ENCODE measurements at regions of chr11 and their contacts with region 1.

Region 1: DNA sequence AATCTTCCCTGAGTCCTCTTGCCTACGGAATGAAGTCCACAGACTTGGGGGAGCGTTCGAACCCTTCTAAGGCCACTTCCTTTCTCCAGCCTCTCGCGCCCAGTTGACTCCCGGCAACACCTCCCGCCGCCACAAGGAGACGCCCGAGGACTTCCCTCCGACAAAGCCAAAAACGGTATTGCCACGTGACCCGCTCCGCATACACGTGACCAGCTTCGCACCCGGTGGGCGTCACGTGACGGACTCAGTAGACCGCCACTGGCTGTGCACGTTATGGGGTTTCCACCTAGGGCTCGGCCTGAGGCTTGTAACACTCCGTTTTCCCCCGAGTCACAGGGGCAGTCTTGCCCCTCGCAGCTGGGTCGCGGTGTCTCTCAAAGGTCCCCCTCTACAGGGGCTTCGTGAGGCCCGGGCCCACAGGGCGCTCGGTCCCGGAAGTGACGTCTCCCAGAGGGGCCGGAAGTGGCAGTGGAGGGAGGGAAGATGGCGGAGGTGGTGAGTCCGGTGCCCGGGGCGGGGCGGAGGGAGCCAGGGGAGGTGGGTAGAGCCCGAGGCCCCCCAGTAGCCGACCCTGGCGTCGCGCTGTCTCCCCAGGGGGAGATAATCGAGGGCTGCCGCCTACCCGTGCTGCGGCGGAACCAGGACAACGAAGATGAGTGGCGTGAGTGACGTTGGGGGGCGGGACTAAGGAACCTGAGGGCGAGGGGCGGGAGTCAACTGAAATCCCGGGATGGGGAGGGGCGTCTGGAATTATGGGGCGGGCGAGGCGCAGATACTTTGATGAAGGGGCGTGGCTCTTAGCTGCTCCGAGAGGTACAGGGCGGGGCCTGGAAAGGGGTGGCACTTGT is at the start of gene KAT5:
- DNase-seq: peak; percentile 99
- H3K4me3 Mint-ChIP-seq: peak within 1 kb of the TSS; percentile 87
- H3K27ac Mint-ChIP-seq: peak within 1 kb of the TSS; percentile 98
- H3K4me1 Mint-ChIP-seq: peaks cover 38% of the 10 kb centered on the region
- H3K27me3 Mint-ChIP-seq: peaks cover 16% of the 10 kb centered on the region

Region 2: DNA sequence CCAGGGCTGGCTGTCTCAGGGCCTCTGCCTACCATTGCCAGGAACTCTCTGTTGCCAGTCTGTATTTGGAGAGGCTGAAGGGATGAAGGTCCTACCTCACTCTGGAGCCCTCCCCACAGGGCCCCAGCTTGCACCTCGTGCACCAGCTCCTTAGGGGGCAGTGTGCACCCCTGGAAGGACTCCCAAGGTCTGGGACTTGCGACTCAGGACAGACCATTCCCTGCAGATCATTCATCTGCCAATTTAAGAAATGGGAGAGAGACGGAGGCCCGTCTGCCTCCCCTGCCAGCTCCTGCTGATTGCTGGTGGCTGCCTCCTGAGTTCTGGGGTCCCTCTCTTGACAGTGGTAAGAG is 240.6 kb before region 1 on chr11:
- CTCF ChIA-PET with region 1: no interaction called
- DNase-seq: peak; percentile 41
- H3K4me3 Mint-ChIP-seq: no peak overlapping the region
- H3K27ac Mint-ChIP-seq: peak overlapping the region; percentile 95
- H3K4me1 Mint-ChIP-seq: peaks cover 32% of the 10 kb centered on the region
- H3K27me3 Mint-ChIP-seq: no peaks in the 10 kb centered on the region

Region 3: GRCh38 chr11:65652511-65653231 is 59.3 kb before region 1 on chr11:
- CTCF ChIA-PET with region 1: no interaction called
- DNase-seq: peak; percentile 96
- H3K4me3 Mint-ChIP-seq: peak overlapping the region; percentile 80
- H3K27ac Mint-ChIP-seq: peak overlapping the region; percentile 89
- H3K4me1 Mint-ChIP-seq: peaks cover 46% of the 10 kb centered on the region
- H3K27me3 Mint-ChIP-seq: no peaks in the 10 kb centered on the region

Region 4: GRCh38 chr11:65766535-65766934 is 54.5 kb after region 1 on chr11:
- CTCF ChIA-PET with region 1: interaction called, 21 read pairs
- DNase-seq: no peak
- H3K4me3 Mint-ChIP-seq: no peak overlapping the region
- H3K27ac Mint-ChIP-seq: no peak overlapping the region
- H3K4me1 Mint-ChIP-seq: peaks cover 3% of the 10 kb centered on the region
- H3K27me3 Mint-ChIP-seq: peaks cover 9% of the 10 kb centered on the region

Region 5: GRCh38 chr11:65958774-65959420 is 246.9 kb after region 1 on chr11:
- CTCF ChIA-PET with region 1: no interaction called
- DNase-seq: no peak
- H3K4me3 Mint-ChIP-seq: no peak overlapping the region
- H3K27ac Mint-ChIP-seq: peak overlapping the region; percentile 99
- H3K4me1 Mint-ChIP-seq: peaks cover 64% of the 10 kb centered on the region
- H3K27me3 Mint-ChIP-seq: no peaks in the 10 kb centered on the region

Region 6: DNA sequence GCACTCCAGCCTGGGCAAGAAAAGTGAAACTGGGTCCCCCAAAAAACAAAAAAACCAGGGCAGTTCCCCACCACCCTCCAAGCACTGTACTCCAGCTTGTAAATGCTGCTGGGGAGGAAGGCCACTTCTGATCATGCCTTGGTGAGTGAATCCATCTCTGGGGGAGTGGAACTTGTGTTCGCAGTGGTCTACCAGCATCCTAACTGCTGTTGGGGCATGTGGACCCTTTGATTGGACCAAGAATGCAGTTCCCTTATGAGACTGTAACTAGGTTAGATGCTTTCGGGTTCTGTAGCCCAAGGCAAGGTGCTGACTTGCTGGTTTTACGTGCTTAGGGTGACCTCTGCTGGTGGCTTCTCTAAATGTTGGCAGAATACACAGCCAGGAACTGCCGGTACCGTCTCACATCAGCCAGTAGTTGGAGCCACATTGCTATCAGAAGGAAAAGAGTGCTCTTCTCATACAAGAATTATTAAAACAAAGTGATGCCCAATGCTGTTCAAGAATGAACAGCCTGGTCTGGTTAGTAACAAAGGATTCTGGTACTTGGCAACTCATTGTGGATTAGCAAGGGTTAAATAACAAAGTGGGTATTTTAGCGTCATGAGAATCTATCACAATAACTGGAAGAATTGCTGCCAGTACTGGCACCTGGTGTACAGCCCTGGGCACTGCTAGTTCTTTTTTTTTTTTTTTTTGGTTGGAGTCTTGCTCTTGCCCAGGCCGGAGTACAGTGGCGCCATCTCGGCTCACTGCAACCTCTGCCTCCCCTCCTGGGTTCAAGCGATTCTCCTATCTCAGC is 277.0 kb after region 1 on chr11:
- CTCF ChIA-PET with region 1: interaction called, 11 read pairs
- DNase-seq: peak; percentile 96
- H3K4me3 Mint-ChIP-seq: no peak overlapping the region
- H3K27ac Mint-ChIP-seq: peak overlapping the region; percentile 74
- H3K4me1 Mint-ChIP-seq: peaks cover 6% of the 10 kb centered on the region
- H3K27me3 Mint-ChIP-seq: no peaks in the 10 kb centered on the region

Measured in activated naive CD4-positive, alpha-beta T cell treated with anti-CD3 and anti-CD28 coated beads, Interleukin-2, amount 10 ng/mL, durations not matched to agents 7 days and 5 days (primary cell).